Aorta (tissue), 5 donors: ENCODE measurements at regions of chr17 and their contacts with region 1.

Region 1: GRCh38 chr17:72120642-72121163 is at the start of gene SOX9:
- DNase-seq: peak; percentile 77 to 86
- ATAC-seq: peak; percentile 78
- H3K4me3 ChIP-seq: peak within 1 kb of the TSS in 1 of 2 donors; percentile 5
- H3K27ac ChIP-seq: no peak within 1 kb of the TSS
- H3K4me1 ChIP-seq: no peaks in the 10 kb centered on the region
- H3K27me3 ChIP-seq: no peaks in the 10 kb centered on the region
- total RNA-seq, gene SOX9: 3.8 to 4.7 TPM

Region 2: DNA sequence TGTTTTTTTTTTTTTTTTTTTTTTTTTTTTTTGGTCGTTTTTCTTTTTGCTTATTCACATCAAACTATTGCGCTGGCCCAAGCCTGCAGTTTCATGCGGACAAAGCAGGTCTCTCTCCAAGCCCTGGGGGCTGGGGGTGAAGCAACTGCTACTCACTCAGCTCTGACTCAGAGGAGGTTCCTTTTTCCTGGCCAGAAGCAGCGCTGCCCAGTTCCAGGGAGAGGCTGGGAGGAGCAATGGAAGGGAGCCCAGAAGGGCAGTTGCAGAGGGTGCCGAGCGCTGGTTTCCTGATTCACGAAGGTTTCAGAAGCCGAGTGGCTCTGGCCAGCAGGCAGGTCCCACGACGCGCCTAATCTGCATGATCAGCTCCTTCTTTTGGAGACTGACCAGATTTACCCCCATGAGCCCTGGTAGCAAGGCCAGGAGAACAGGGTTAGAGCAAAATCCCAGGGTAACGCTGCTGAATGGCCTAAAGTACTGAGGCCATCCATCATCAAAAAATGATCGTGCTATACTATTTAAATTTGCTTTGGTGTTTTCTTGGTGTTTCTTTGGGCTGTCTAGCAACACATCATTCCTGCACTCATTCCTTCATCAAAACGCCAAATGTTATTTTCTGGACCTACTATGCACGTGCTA is 144.6 kb before region 1 on chr17:
- intact Hi-C with region 1: loop called in 1 of 2 experiments (anchors 10 kb)
- DNase-seq: peak; percentile 94
- ATAC-seq: peak; percentile 97
- H3K4me3 ChIP-seq: no peak overlapping the region
- H3K27ac ChIP-seq: peak overlapping the region in 1 of 2 donors; percentile 41
- H3K4me1 ChIP-seq: no peaks in the 10 kb centered on the region
- H3K27me3 ChIP-seq: no peaks in the 10 kb centered on the region

Region 3: DNA sequence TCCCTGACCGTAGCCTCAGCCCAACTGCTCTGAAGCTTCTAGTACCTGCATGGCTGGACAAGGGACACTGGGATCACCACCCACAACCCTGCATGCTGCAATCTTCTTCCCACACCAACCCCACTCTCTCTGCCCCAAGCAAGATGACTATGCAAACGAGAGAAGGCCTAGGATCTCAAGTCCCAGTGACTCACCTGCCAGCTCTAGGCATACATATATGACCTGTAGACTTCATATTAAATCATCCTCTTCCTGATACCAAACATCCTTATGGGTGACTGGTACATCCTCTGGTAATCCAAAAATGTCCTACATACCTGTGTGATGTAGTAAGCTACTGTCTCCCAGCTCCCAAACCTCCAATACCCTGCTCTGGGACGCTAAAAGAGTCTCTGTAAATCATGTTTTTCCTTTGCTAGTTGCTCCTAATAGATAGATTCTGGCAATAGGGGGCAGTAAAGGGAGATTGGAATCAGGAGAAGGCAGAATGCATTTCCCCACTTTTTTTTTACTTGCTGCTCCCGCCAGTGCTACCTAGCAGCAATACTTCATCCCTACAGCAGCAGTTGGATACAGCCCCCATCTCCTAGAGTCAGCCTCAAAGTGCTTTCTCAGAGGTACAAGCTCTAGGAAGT is 43.3 kb before region 1 on chr17:
- intact Hi-C with region 1: no loop called
- DNase-seq: no peak
- ATAC-seq: no peak
- H3K4me3 ChIP-seq: no peak overlapping the region
- H3K27ac ChIP-seq: no peak overlapping the region
- H3K4me1 ChIP-seq: no peaks in the 10 kb centered on the region
- H3K27me3 ChIP-seq: peaks cover 0 to 2% of the 10 kb centered on the region in 2 donors

Region 4: DNA sequence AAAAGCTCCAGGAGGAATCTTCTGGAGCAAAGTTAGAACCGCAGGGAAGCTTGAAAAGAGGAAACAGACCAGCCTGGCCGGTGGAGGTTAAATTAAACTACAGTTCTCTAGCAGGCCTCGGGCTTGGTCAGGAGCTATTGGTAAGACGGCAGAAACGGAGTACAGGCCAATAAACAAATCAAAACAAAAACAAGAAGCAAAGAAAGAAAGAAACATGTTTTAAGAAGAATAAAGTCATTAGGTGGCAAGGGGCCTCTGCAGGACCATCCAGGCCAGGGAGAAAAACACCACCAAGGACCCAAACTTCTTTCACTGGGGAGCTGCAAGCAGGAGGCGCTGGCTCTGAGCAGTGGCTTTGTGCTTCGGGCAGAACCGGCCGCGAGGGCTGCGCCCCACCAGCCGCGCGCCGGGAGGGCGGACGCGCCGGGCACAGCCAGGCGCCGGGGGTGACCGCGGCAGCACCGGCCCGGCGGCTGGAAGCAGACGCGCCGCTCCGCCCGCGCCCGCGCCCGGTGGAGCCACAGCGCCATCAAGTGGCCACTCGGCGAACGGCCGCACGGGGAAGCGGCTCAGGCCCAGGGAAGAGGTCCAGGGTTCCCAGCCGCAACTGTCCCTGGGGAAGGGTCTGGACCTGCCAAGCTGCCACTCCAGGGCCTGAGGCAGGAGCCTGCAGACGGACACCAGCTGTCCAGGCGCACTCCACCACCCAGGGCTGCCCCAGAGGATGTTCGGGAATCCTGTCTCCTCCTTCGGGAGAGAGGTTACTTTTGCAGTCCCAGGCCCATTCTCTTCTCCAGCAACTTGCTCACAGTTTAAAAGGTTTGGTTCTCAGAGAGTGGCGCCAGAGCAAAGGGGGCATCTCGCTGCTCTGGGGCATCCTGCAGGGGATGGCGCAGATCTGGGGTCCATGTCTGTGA is 419.5 kb after region 1 on chr17:
- intact Hi-C with region 1: loop called (anchors 5 to 10 kb)
- DNase-seq: peak; percentile 66 to 91
- ATAC-seq: peak; percentile 93
- H3K4me3 ChIP-seq: no peak overlapping the region
- H3K27ac ChIP-seq: no peak overlapping the region
- H3K4me1 ChIP-seq: no peaks in the 10 kb centered on the region
- H3K27me3 ChIP-seq: no peaks in the 10 kb centered on the region